ENCODE measurements at regions of chr1 and their contacts with region 1.

Region 1: GRCh38 chr1:236819856-236820255 is 24.8 kb downstream of the MTR start:
- DNase-seq: no peak
- H3K4me3 Mint-ChIP-seq: no peak overlapping the region
- H3K27ac Mint-ChIP-seq: no peak overlapping the region
- H3K4me1 Mint-ChIP-seq: peaks cover 4% of the 10 kb centered on the region
- H3K27me3 Mint-ChIP-seq: no peaks in the 10 kb centered on the region

Region 2: DNA sequence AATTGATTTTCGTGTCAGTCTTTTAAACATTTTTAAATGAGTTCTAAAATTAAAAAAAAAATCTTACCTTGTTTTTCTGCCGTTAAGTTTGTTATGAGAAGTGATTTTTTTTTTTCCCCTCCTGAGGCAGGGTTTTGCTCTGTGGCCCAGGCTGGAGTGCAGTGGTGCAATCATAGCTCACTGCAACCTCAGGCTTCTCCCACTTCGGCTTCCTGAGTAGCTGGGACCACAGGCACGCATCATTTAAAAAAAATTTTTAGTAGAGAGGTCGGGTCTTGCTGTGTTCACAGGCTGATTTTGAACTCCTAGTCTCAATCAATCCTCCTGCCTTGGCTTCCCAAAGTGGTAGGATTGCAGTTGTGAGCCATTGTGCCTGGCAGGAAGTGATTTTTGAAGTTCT is 16.3 kb after region 1 on chr1:
- intact Hi-C with region 1: no loop called
- DNase-seq: no peak
- H3K4me3 Mint-ChIP-seq: no peak overlapping the region
- H3K27ac Mint-ChIP-seq: no peak overlapping the region
- H3K4me1 Mint-ChIP-seq: peaks cover 10% of the 10 kb centered on the region
- H3K27me3 Mint-ChIP-seq: no peaks in the 10 kb centered on the region

Region 3: DNA sequence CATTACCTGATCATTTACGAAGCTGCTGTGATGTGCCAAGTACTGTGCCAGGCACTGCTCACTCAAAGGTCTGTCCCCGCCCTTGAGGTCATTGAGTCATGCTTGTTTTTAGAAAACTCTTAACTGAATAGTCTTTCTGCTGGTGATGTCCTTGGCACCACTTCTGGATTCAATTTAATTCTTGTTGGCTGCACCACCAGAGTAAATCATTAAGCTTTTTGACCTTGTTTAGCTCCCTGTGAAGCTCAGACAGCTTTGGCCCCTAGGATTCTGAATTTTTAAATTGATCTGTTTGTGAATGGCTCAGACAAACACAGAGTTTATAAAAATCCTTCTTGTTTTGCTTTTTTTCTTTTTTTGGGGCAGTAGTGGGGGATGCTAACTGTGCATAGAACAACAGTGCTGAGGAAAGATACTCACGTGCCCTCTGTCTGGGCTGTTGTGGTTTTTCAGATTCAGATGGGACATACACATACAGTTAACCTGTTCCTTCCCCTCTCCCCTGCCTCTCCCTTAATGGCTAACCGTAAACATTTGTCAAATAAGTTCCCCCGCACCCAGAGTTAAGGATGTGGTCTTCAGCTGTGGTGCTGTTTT is 42.9 kb after region 1 on chr1:
- intact Hi-C with region 1: loop called (anchors 5 kb)
- DNase-seq: no peak
- H3K4me3 Mint-ChIP-seq: no peak overlapping the region
- H3K27ac Mint-ChIP-seq: no peak overlapping the region
- H3K4me1 Mint-ChIP-seq: peaks cover 35% of the 10 kb centered on the region
- H3K27me3 Mint-ChIP-seq: no peaks in the 10 kb centered on the region